Dorsolateral prefrontal cortex (tissue), 120 donors: ENCODE measurements at regions of chr6 and their contacts with region 1.

Region 1: GRCh38 chr6:142926494-142927270 is 18.3 kb downstream of the HIVEP2 start:
- DNase-seq: peak; percentile 59 to 89 (median 85)
- H3K4me3 ChIP-seq: peak overlapping the region; percentile 49 to 86 (median 72)
- H3K27ac ChIP-seq: peak overlapping the region; percentile 82 to 98 (median 95)
- H3K27me3 ChIP-seq: no peaks in the 10 kb centered on the region
- CTCF ChIP-seq: peak in 13 of 56 donors; percentile 4 to 44 (median 18)

Region 2: DNA sequence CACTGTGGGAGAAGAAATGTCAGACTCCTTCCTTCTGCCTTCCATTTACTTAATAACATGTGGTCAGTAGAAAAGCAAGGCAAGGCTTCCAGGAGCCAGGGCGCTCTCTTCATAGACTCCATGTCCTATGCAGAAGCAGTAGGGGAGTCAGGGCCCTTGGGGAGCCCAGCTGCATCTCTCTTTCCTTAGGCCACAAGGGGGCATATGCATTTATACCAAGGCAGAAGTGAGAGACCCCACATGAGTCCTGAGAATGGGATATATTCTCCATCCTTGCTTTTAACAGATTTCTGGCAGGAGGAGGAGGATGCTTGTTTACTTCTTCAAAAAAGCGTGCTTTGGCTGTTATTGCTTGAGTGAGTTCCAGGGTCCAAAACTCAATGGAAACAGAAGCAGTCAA is 180.2 kb before region 1 on chr6:
- intact Hi-C with region 1: no loop called
- DNase-seq: peak in 1 of 10 donors; percentile 40
- H3K4me3 ChIP-seq: no peak overlapping the region
- H3K27ac ChIP-seq: peak overlapping the region in 1 of 59 donors; percentile 9
- H3K27me3 ChIP-seq: no peaks in the 10 kb centered on the region
- CTCF ChIP-seq: peak in 52 of 56 donors; percentile 25 to 71 (median 52)

Region 3: GRCh38 chr6:142845624-142846458 is 80.8 kb before region 1 on chr6:
- intact Hi-C with region 1: loop called in 1 of 2 experiments (anchors 1 kb)
- DNase-seq: peak; percentile 64 to 89 (median 76)
- H3K4me3 ChIP-seq: peak overlapping the region; percentile 4 to 69 (median 49)
- H3K27ac ChIP-seq: peak overlapping the region in 57 of 59 donors; percentile 16 to 89 (median 81)
- H3K27me3 ChIP-seq: no peaks in the 10 kb centered on the region
- CTCF ChIP-seq: peak in 29 of 56 donors; percentile 7 to 46 (median 24)

Region 4: DNA sequence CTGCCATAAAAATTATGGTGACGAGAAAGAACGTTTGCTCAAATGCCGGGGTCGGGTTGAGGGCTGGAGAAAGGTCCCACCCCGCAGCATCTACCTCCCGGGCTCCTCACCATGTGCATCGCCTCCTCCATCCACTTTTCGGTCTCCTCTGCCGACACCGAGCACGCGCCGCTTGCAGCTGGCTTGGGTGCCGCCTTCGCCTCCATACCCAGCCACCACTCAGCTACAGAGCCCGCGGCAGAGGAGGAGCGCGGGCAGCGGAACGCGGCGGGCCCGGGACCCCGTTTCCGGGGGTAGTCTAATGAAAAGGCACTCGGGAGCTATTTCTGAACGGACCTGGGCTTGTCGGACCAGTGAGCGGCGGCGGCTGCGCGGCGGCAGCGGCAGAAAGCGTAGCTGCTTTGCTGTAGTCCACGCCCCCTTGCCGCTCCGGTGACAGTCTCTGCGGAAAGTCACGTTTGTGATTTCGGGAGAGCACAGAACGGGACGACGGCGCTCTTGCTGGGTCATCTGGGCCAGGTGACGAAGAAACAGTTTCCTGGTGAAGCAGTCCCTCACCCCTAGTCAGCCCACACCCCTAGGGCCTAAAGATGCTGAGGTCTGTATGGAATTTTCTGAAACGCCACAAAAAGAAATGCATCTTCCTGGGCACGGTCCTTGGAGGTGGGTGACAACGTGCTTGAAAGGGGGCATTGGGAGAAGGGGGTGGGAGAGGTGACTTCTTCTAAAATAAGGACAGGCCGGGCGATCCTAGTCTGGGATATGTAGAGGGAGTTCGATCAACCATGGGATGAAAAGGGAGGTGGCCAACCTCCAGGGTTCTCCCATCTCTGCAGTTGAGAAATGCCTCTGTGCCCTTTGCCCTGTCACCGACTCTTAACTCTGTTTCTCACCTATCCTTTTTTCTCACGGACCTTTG is 524.0 kb after region 1 on chr6 and contains the starts of genes ADAT2 and PEX3:
- intact Hi-C with region 1: loop called in 1 of 2 experiments (anchors 10 kb)
- DNase-seq: peak; percentile 83 to 93 (median 90)
- H3K4me3 ChIP-seq: peak within 1 kb of the TSS; percentile 56 to 96 (median 82)
- H3K27ac ChIP-seq: peak within 1 kb of the TSS in 55 of 59 donors; percentile 9 to 89 (median 61)
- H3K27me3 ChIP-seq: no peaks in the 10 kb centered on the region
- CTCF ChIP-seq: peak in 48 of 56 donors; percentile 13 to 59 (median 36)
- total RNA-seq, gene ADAT2: 2.0 to 10.1 (median 5.1) TPM
- total RNA-seq, gene PEX3: 14.5 to 40.6 (median 28.6) TPM